ENCODE measurements at regions of chr6 and their contacts with region 1.

Region 1: GRCh38 chr6:168851460-168852375 is 401.9 kb downstream of the THBS2 start:
- DNase-seq: no peak
- ATAC-seq: peak; percentile 65
- H3K4me3 ChIP-seq: peak overlapping the region; percentile 18 to 38
- H3K27ac ChIP-seq: 0 out of 2 replicates have a peak overlapping the region, but pooled peaks have one; percentile 18
- H3K4me1 ChIP-seq: peaks cover 3% of the 10 kb centered on the region; the same call in 1 of the 2 replicates
- H3K27me3 ChIP-seq: no peaks in the 10 kb centered on the region
- CTCF ChIP-seq: no peak

Region 2: GRCh38 chr6:168297643-168298042 is 554.1 kb before region 1 on chr6:
- CTCF ChIA-PET with region 1: no interaction called
- POLR2A ChIA-PET with region 1: interaction called, 14 read pairs
- in situ Hi-C with region 1: no loop called
- intact Hi-C with region 1: no loop called
- DNase-seq: no peak
- ATAC-seq: no peak
- H3K4me3 ChIP-seq: no peak overlapping the region
- H3K27ac ChIP-seq: no peak overlapping the region
- H3K4me1 ChIP-seq: no peaks in the 10 kb centered on the region
- H3K27me3 ChIP-seq: peaks cover 10% of the 10 kb centered on the region; the same call in 1 of the 2 replicates
- CTCF ChIP-seq: no peak

Region 3: GRCh38 chr6:168662301-168662936 is 189.3 kb before region 1 on chr6:
- CTCF ChIA-PET with region 1: interaction called, 13 read pairs
- POLR2A ChIA-PET with region 1: no interaction called
- in situ Hi-C with region 1: no loop called
- intact Hi-C with region 1: no loop called
- DNase-seq: no peak
- ATAC-seq: no peak
- H3K4me3 ChIP-seq: no peak overlapping the region
- H3K27ac ChIP-seq: no peak overlapping the region
- H3K4me1 ChIP-seq: no peaks in the 10 kb centered on the region
- H3K27me3 ChIP-seq: peaks cover 31% of the 10 kb centered on the region
- CTCF ChIP-seq: no peak

Measured in Panc1 (cell line).